Posterior cingulate gyrus (tissue), 11 donors: ENCODE measurements at regions of chr16 and their contacts with region 1.

Region 1: DNA sequence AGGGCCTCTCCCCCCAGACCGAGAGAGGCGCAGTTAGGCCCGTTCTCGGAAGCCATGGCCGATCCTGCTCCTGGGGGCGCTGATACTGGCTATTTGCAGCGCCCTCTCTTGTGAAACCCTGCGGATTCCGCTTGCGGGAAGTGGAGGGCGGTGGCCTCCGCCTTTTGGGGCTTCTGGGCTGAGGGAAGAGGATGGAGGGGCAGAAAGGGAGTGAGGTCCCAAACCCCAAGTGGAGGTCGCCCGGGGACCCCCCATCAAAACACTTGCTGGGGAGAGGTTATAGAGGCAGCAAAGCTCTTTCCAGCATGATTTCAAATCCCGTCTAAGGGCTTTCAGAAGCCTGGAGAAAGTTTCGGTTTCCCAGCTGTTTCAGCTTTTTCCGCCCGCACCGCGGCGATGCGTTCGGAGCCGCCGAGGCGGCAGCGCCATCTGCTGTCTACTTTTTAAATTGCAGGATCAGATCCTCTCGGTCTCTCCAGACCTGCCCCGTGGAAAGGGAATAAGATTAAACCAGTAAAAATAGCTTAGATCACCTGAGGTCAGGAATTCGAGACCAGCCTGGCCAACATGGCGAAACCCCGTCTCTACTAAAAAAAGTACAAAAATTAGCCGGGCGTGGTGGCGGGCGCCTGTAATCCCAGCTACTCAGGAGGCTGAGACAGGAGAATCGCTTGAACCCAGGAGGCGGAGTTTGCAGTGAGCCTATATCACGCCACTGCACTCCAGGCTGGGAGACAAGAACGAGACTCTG is 15.8 kb downstream of the SNX20 start:
- DNase-seq: peak; percentile 61 to 95 (median 84)

Region 2: GRCh38 chr16:50024684-50025536 is 640.4 kb before region 1 on chr16 and contains the start of gene CNEP1R1:
- intact Hi-C with region 1: loop called (anchors 10 kb)
- DNase-seq: peak; percentile 89 to 99 (median 92)

Region 3: DNA sequence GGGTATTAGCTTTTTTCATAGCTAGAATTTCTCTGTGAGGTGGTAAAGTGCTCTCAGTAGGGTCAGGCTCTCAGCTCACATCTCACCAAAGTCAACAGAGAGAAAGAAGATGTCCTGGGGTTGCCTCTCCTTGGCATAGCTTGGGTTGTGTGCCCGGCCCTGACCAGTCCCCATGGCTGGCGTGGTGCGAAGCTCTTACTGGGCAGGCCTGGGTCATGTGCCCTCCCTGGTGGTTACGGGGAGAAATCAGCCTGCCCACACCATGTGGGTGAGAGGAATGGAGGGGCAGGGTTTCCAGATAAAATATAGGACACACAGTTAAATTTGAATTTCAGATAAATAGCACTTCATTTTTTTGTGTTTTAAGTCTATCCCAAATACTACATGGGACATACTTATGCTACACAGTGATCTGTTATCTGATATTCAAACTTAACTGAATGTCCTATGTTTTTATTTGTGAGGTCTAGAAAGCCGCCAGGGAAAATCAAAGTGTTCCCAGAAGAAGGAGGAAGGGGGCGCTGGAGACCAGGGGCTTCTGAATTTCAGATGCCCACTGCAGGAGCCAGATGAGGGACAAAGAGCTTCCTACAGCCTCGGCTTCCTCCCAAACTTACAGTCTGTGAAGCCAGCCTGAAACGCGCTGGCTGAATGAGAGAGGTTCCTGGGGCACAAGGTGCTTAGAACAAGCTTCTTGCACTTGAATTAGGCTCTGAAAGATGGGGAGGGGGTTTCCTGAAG is 71.7 kb before region 1 on chr16:
- intact Hi-C with region 1: loop called (anchors 2 kb)
- DNase-seq: peak in 3 of 10 donors; percentile 29 to 79 (median 38)

Region 4: DNA sequence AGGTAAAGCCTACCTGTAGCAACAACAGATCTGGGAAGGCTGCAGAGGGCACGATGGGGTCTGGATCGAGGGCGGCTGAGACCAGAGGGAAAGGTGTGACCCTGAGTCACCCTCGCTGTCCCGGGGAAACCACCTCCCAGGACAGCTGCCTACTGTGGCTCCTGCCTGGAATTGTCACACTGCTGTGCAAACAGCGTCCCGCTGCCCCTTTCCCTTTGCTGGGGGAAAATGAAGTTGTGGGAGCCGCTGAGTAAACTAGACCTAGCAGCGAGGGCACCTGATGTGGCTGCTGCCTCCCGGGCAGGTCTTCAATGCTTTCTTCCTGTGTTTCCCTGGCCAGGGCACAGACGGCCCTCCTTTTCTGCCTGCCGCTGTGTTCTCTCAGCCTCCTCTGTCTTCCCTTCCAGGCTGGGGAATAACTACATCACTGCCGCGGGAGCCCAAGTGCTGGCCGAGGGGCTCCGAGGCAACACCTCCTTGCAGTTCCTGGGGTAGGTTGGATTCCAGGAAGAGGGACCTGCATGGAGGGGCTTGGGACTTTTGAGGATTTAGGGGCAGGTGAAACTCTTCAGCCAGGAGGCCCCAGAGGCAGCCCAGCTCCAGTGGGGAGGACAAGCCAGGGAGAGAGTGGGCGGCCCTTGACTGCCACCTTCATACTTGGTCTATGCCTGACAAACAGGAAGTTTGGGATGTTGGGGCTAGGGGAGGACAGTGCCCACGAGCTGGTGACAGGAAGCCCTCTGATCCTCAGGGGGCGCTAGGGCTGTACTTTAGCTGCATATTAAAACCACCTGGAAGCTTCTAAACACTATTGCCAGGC is 54.4 kb after region 1 on chr16:
- intact Hi-C with region 1: no loop called
- DNase-seq: no peak

Region 5: DNA sequence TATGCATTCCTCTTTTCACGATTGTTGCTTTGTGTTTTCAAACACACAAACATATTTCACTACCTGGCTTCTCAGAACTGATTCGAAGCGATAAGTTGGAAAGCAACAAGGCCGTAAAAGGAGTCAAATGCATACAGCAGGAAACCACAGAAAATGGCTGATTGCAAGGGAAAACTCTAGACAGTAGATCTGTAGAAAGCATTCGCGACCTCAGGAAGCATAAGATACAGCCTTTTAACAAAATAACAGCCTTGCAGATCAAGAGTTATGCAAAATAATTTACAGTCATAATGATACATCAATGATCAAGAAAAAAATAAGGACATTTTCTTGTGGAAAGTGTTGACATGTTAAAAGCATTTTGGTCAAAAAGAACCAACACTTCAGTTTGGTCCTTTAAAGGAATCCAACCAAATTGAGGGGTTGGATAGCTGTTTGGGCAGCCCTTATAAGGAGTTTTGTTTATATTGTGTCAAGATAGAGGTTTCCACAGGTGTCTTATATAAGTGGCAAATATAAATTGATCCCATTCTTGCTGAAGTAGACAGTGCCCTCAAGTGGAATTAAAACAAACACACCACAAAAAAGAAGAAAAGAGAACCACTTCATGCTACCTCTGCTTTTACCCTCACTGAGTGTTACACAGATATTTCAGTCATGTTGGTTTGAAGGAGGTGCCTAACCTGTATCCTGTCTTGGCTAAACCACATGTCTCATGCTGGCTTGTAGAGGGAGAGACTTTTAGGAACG is 82.1 kb after region 1 on chr16:
- intact Hi-C with region 1: loop called (anchors 5 kb)
- DNase-seq: no peak

Region 6: DNA sequence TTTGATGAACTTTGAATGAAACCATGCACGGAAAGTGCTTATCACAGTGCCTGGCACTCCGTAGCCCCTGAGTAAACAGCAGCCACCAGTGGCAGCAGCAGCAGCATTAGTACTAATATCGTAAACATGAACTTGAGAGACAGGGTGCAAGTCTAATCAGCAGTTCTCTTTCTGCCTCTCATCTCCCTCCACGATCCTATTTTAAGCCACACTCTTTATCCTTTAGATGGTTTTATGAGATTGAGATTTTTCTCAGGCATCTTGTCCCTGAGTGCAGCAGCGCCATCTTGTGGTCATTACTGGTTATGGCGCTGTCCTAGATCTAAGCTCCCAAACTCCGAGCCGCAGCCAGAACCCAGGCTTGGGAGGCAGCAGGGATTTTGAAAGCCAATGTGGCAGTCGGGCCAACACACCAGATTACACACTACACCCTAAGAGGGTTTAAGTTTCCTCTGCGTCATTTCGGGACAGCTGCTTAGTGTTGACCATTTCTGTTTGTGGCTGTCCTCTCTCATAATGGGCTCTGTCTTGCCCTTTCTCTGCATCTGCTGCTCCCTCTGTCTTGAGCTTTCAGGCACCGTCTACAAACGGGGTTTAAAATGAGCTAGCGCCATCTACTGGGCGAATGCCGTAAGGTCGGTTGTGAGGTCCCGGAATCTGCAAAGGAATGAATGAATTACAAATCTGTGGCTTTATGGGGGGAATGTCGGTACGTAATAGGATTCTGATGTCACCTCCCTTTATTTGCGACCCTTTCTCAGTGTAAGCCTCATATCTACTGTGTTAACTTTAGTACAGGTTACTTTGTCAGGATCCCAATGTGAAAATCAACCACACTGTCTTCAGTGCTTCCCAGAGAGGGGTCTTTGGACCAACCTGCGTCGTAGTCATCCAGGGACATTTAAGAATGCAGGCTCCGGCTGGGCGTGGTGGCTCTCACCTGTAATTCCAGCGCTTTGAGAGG is 141.1 kb after region 1 on chr16:
- intact Hi-C with region 1: loop called (anchors 5 kb)
- DNase-seq: peak; percentile 73 to 97 (median 88)